ENCODE measurements at regions of chr1 and their contacts with region 1.

Region 1: DNA sequence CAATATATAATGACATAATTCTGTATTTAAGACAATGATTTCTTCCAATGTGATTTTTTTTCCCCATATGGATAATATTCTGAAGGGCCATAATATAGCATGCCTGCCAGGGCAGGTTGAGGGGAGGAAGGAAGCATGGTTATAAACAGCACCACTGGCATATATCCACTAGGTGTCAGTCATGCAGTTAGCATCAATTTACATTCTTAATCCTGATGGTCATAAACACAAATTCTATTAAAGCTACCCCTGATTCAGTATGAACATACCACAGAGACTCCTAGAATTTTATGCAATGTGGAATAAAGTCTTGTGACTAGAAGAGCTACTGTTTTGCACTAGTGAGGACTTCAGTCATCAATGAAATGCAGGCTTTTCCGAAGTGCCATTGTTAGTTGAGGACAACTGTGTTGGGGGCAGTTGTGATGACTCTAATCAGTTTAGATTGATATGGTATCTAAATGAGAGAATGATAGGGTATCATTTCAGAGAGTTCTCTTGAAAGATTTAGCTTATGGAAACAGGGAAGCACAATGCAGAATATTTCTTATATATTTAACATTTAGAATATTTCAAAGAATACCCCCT is 342.7 kb upstream of the NR5A2 start:
- DNase-seq: peak; percentile 56
- H3K4me3 ChIP-seq: no peak overlapping the region
- H3K27ac ChIP-seq: no peak overlapping the region
- H3K4me1 ChIP-seq: peaks cover 16% of the 10 kb centered on the region
- H3K27me3 ChIP-seq: no peaks in the 10 kb centered on the region
- CTCF ChIP-seq: peak; percentile 85 to 90

Region 2: DNA sequence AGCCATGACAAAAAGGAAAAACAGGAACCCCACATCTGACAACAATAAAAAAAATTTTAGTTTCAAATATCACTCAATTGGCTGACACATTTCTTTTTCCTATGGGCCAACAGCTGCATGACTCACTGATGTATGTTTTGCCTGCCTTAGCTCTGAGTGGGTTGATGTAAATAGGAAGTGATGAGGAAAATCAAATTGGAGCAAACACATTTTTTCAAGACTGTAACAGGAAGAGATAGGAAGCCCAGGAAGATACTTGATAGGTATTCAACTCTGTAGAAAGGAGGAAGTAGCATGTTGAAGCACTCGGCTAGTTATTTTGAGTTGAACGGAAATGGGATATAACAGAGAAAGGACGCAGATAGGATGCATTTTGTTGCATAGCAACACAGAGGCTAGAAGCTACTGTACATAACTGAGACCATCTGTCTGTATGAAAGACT is 174.7 kb after region 1 on chr1:
- CTCF ChIA-PET with region 1: no interaction called
- dilution Hi-C with region 1: no loop called
- in situ Hi-C with region 1: no loop called
- intact Hi-C with region 1: loop called (anchors 10 kb)
- DNase-seq: peak; percentile 67
- H3K4me3 ChIP-seq: no peak overlapping the region
- H3K27ac ChIP-seq: peak overlapping the region; percentile 68
- H3K4me1 ChIP-seq: peaks cover 43% of the 10 kb centered on the region
- H3K27me3 ChIP-seq: no peaks in the 10 kb centered on the region
- CTCF ChIP-seq: no peak

Region 3: DNA sequence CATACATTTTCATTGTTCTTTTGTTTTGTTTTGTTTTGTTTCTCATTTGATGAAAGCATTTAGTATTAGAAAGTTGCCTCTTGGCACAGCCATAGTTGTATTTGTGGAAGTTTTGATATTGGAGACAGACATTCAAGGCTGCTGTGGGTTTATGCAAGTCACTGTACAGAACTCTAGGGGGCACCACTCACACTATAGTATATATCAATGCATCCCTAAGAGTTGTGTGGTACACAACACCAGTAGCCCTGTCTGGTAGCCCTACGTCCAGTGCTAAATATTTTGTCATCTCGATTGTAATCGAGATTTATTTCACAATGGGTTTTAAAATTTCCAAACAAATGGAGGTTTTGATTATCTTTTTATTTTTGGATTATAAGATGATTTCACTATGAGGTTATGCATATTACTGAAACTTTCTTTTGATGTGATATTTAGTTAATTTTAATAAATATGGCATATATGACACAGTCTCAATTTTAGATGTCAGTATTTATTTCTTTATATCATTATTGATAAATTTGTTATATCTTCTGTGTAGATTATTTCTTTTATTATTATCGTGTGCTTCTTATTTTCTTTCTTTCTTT is 455.0 kb after region 1 on chr1:
- CTCF ChIA-PET with region 1: no interaction called
- dilution Hi-C with region 1: no loop called
- in situ Hi-C with region 1: no loop called
- intact Hi-C with region 1: loop called (anchors 2 kb)
- DNase-seq: peak; percentile 32
- H3K4me3 ChIP-seq: no peak overlapping the region
- H3K27ac ChIP-seq: no peak overlapping the region
- H3K4me1 ChIP-seq: no peaks in the 10 kb centered on the region
- H3K27me3 ChIP-seq: no peaks in the 10 kb centered on the region
- CTCF ChIP-seq: peak; percentile 72 to 78

Region 4: DNA sequence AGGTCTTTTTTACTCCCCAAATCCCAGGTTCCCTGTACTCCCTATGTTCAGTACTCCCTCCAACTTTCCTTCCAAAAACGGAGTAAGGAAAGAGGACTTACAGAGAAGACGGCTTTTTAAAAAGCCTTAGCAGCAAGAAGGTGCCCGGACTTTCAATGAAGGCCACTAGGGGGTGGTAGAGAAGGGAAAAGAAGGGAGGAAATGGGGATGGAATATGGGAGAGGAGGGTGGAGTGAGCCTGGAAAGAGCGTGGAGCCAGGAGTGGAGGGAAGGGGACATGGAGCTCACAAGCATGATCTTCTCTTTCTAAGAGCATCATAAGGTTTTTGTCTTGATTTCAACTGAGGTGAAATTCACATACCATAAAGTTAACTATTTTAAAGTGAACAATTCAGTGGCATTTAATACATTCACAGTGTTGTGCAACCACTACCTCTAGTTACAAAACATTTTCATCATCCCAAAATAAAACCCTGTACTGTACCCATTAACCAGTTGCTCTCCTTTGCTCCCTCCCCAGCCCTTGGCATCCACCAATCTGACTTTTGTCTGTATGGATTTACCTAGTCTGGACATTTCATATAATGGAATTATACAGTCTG is 595.1 kb after region 1 on chr1:
- CTCF ChIA-PET with region 1: interaction called, 23 read pairs
- dilution Hi-C with region 1: no loop called
- in situ Hi-C with region 1: loop called in 1 of 2 experiments (anchors 25 kb)
- intact Hi-C with region 1: loop called (anchors 1 kb)
- DNase-seq: peak; percentile 53
- H3K4me3 ChIP-seq: no peak overlapping the region
- H3K27ac ChIP-seq: no peak overlapping the region
- H3K4me1 ChIP-seq: no peaks in the 10 kb centered on the region
- H3K27me3 ChIP-seq: no peaks in the 10 kb centered on the region
- CTCF ChIP-seq: peak; percentile 78

Region 5: DNA sequence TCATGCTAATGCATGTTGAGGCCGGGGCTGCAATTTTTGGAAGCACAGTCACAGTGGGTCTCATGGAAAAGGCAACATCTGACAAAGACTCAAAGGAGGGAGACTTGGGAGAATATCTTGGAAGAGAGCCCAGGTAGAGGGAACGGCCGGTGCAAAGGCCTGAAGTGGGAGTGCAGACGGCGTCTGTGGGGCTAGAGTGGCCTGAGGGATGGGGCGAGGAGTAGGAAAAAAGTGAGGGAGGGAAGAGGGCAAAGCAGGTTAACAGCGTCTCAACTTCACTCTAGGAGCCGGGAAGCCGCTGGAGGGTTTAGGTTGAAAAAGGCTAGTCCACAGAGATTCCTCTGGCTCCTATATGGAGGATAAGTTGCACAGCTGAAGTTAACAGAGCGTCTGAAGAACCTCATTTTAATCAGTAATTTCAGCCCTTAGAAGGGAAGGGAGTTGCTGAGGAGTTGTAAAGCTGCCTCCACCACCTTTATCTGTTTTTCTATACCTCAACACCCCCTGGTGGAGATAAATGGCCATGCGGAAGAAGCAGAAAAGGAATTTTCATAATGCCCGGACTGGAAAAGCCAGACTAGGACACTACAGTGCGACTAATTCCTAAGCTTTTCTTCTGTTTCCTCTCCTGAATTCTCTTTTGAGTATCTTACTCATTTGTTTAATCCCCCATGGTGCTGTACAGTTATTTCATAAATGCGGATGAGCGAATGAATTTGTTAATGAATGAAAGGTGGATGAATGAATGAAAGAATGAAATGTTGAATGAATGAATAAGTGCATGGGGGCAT is 803.8 kb after region 1 on chr1:
- CTCF ChIA-PET with region 1: no interaction called
- dilution Hi-C with region 1: no loop called
- in situ Hi-C with region 1: loop called (anchors 10 kb)
- intact Hi-C with region 1: loop called (anchors 1 kb)
- DNase-seq: peak; percentile 57
- H3K4me3 ChIP-seq: no peak overlapping the region
- H3K27ac ChIP-seq: no peak overlapping the region
- H3K4me1 ChIP-seq: peaks cover 14% of the 10 kb centered on the region
- H3K27me3 ChIP-seq: no peaks in the 10 kb centered on the region
- CTCF ChIP-seq: peak; percentile 82 to 86